ENCODE measurements at regions of chr6 and their contacts with region 1.

Region 1: GRCh38 chr6:32971581-32972352 is 3.4 kb downstream of the BRD2 start:
- DNase-seq: peak; percentile 95
- CTCF ChIP-seq: no peak

Region 2: DNA sequence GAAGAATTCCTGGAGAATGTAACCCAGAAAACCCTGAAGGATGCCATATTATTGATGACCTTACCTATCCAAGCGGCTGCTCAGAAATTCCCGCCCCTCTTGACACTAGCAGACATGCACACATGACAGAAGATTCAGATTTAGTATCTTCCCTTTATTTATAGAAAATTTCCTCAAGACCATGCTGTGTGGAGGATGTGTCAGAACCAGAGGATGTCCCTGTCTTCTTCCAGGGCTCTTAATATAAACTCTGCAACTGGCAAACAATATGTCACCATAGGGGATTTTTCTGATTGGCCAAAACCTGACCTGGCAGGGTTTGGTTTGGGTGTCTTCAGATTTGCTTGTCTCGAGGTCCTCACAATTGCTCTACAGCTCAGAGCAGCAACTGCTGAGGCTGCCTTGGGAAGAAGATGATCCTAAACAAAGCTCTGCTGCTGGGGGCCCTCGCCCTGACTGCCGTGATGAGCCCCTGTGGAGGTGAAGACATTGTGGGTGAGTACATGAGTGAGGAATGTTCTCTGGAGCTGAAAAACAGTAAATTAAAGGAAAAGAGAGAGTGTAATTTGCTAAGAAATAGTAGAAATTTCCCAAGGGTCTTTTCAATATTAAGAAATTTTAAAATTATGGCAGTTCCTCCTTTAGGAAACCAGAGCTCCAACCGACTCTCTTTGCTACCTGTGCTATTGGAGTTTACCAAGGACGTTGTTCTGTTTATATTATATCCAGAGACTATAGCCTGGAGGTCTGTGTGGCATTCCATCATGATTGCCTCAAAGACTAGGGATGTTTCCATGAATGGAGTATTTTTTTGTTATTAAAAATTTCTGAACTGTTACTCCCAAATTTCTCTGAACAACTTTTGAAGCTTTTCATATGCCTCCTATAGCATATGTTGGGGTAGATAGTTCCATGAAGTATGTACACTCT is 230.5 kb before region 1 on chr6 and contains the start of gene HLA-DQA2:
- CTCF ChIA-PET with region 1: no interaction called
- POLR2A ChIA-PET with region 1: no interaction called
- DNase-seq: no peak
- CTCF ChIP-seq: no peak

Region 3: DNA sequence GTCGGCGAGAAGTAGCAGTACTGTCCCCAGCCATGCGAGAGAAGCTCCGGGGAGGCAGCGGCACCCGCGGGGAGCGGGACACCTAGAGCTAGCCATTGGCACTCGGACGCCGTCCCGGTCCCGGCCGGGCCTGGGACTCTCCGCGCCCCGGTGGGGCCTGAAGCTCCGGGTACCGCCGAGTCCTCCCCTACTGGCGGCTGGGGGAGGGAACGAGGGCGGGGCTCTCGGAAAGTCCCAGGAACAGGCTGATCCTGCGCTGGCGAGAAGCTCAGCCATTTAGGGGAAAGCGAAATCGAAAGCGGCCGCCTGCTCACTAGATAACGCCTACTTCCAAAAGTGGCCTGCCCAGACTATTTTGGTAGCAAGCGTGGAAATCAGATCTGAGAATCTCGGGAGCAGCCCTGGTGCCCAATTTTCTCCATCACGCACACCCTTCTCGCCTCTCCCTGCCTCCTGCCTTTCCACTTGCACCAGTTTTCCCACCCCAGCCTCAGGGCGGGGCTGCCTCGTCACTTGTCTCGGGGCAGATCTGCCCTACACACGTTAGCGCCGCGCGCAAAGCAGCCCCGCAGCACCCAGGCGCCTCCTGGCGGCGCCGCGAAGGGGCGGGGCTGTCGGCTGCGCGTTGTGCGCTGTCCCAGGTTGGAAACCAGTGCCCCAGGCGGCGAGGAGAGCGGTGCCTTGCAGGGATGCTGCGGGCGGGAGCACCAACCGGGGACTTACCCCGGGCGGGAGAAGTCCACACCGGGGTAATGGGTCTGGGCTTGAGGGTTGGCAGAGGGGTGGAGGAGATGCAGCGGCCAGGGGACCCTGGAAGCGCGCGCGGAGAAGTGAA is 118.0 kb before region 1 on chr6 and contains the starts of genes PSMB9 and TAP1:
- CTCF ChIA-PET with region 1: interaction called, 5 read pairs
- POLR2A ChIA-PET with region 1: interaction called, 22 read pairs
- DNase-seq: peak; percentile 93
- CTCF ChIP-seq: peak; percentile 97

Region 4: DNA sequence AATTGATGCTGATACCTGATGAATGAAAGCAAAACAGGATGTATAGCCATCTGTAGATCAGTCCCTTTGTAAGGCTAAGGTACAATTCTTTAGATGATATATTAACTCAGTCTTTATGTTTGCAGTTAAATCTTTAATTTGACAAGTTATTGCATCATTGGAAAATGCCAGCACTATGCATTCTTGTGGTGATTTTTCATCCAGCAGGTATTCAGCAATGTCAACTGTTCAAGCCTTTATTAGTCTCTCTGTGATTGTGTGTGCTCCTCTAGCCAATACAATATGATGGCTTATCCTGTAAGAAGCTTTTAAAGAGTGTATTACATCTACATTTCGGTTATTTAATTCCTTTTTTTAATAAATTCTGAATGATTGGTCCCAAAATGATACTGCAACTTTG is 65.2 kb before region 1 on chr6:
- CTCF ChIA-PET with region 1: interaction called, 3 read pairs
- POLR2A ChIA-PET with region 1: interaction called, 12 read pairs
- DNase-seq: no peak
- CTCF ChIP-seq: no peak

Region 5: DNA sequence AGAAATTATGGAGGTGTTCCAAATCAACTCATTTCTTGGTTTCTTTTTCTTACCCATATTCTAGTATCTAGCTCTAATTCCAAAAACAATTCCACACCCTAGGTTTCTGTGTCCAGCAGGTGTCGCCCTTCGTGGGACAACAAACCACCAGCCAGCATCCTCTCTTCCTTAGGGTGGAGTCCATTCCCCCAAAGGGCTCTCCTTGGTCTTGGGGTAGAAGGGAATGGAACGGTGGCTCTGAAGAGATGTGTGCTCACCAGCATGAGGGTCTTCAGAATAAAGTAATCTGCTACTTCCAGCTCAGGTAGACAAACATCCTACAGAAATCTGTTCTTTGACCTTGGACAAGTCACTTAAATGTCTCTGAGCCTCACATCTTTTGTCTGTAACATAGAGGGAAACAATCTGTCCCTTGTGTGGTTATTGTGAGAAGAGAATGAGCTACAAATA is 38.1 kb before region 1 on chr6:
- CTCF ChIA-PET with region 1: interaction called, 79 read pairs
- POLR2A ChIA-PET with region 1: interaction called, 211 read pairs
- DNase-seq: peak; percentile 54
- CTCF ChIP-seq: peak; percentile 81

Region 6: DNA sequence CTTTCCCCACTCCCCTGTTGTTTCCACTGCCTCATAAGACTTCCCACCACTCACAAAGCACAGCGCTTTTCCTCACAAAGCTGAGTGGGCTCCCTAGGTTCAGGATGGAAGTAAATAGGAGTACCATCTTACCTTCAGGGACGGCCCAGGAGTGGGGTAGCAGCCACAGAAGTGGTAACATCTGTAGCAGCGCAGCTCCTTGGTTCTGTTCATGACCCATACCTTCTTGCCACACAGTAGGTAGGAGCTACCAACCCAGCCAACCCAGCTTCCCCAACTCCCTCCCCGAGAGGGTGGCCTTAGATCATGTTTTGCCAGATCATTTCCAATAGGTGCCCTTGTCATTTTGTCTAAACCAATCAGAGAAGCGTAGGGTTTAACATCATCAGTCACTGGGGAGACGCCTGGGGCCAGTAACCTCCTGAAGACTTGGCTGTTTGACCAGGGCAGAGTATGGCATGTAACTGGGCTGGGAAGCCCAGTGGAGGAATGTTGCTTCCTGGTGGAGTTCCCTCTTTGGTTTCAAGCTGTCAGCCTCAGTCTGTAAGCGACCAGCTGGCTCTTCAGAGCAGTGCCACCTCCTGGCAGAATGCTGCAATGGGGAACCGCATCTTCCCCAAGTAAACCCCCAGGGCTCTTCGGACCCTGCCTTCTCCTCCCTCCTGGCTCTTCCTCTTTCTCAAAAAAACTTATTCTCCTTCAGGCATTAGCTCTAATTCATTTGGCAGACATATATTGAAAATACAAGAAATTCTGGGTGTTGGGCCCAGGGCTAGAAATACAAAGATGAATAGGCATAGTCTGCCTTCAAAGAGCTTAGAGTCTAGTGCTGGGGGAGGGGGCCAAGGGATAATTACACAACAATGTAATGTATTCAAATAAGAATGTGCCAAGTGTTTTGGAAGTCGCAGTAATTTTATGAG is 18.7 kb before region 1 on chr6 and contains the start of gene HLA-DMA:
- CTCF ChIA-PET with region 1: interaction called, 313 read pairs
- POLR2A ChIA-PET with region 1: interaction called, 219 read pairs
- DNase-seq: peak; percentile 86
- CTCF ChIP-seq: peak; percentile 56

Region 7: GRCh38 chr6:33029328-33030184 is 57.8 kb after region 1 on chr6:
- CTCF ChIA-PET with region 1: no interaction called
- POLR2A ChIA-PET with region 1: interaction called, 23 read pairs
- DNase-seq: peak; percentile 64
- CTCF ChIP-seq: peak; percentile 19

Region 8: DNA sequence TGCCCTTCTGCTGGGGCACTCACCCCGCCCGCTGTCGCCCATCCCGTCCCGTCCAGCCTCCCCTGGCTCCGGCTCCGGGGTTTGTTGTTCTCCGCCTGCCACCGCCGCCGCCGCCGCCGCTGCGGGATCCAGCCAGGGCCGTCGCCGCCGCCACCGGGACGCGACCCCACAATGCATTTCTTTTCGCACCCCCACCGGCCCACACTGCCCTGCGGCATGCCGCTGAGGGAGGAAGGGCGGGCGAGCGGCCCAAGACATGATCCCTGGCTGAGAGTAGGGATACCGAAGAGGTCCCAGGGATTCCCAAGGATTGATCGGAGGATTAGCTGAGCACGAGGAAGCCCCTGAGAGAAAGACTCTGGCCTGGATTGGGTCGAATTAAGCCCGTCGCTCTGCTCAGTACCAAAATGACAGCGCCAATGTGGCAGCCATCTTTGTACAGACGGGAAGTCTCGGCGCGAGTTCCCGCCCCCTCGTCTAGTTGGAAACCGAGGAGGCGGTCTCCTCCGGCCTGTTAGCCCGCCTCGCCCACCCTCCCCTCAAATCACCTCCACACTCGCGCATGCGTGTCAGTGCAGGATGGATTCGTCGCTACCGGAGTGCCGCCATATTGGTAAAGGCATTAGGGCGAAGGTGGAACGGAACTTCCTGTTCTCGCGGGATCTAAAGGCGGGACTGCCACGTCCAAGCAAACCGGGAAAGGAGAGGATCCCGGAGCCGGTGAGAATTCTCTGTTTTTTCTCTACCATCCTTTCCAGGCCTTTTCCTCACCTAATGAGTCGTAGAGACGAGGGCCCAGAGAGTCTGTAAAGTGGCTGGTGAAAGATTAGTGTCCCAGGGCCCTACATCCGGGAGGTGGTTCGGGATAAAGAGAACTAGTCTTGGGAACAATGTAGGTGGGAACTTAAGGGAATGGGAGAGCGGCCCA is 228.7 kb after region 1 on chr6 and contains the starts of genes RXRB and SLC39A7:
- CTCF ChIA-PET with region 1: no interaction called
- POLR2A ChIA-PET with region 1: interaction called, 14 read pairs
- DNase-seq: peak; percentile 98
- CTCF ChIP-seq: no peak

Region 9: DNA sequence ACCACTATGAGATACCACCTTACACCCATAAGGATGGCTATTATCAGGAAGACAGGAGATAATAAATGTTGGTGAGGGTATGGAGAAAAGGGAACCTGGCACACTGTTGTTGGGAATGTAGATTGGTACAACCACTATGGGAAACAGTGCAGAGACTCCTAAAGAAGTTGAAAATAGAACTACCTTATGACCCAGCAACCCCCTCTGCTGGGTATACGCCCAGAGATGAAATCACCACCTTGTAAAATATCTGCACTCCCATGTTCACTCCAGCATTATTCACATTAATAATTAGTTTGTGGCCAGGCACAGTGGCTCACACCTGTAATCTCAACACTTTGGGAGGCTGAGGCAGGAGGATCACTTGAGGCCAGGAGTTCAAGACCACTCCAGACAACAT is 509.4 kb after region 1 on chr6:
- CTCF ChIA-PET with region 1: no interaction called
- POLR2A ChIA-PET with region 1: no interaction called
- DNase-seq: no peak
- CTCF ChIP-seq: no peak

Measured in GM10248 (cell line).